ENCODE measurements at regions of chr14 and their contacts with region 1.

Region 1: GRCh38 chr14:69726761-69727511 is 40.0 kb upstream of the SRSF5 start:
- DNase-seq: peak; percentile 89
- H3K4me3 ChIP-seq: peak overlapping the region in 3 of 4 donors; percentile 35 to 49 (median 43)
- H3K27ac ChIP-seq: peak overlapping the region; percentile 23 to 66 (median 44)
- H3K4me1 ChIP-seq: peaks cover 0 to 11% (median 7%) of the 10 kb centered on the region in 4 donors
- H3K27me3 ChIP-seq: no peaks in the 10 kb centered on the region
- CTCF ChIP-seq: peak; percentile 96 to 98 (median 98)
- EP300 ChIP-seq: no peak
- POLR2A ChIP-seq: no peak

Region 2: DNA sequence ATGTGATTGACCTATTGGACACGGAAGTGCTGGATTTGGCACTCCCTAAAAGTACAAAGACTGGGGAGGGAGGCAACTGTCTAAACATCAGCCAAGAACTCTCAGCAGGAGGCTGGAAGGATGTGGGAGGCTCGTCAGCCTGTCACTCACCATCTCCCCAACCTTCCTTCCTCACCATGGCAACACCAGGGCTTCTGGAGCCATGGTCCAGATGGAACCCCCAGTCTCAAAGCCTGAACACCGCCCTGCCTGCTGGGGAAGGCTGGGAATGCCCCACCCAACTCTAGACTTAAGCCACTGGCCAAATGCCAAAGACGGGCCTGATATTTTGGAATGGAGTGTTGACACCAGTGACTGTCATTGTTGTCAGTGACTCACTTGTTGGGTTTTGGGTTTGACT is 411.6 kb before region 1 on chr14:
- intact Hi-C with region 1: no loop called
- DNase-seq: peak; percentile 25
- H3K4me3 ChIP-seq: no peak overlapping the region
- H3K27ac ChIP-seq: no peak overlapping the region
- H3K4me1 ChIP-seq: peaks cover 0 to 21% (median 15%) of the 10 kb centered on the region in 4 donors
- H3K27me3 ChIP-seq: no peaks in the 10 kb centered on the region
- CTCF ChIP-seq: no peak
- EP300 ChIP-seq: no peak
- POLR2A ChIP-seq: no peak

Region 3: DNA sequence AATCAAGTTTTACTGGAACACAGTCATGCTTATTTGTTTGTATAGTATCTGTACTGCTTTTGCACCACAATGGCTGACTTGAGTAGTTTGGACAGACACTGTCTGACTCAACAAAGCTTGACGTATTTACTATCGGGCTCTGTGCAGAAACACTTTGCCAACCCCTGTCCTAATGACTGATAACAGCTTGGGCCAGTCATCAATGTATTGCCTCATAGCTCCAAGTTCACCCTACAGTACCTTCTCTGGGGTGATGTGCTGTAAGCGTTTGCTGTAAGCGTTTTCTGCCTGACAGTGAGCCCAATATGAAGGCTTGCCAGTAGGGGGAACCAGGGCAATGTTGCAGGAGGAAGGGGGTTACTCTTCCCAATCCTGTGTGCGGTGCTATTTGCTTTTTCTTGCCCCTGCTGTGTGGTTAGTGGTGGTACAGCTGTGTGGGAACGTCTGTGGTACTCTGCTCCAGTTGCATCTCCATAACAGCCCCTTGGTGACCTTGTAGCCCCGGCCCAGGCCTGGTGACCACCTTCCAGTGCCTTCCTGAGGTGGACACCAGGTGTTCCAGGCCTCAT is 146.8 kb before region 1 on chr14:
- intact Hi-C with region 1: loop called (anchors 1 kb)
- DNase-seq: no peak
- H3K4me3 ChIP-seq: no peak overlapping the region
- H3K27ac ChIP-seq: no peak overlapping the region
- H3K4me1 ChIP-seq: no peaks in the 10 kb centered on the region
- H3K27me3 ChIP-seq: peaks cover 0 to 24% (median 7%) of the 10 kb centered on the region in 3 donors
- CTCF ChIP-seq: no peak
- EP300 ChIP-seq: no peak
- POLR2A ChIP-seq: no peak